ENCODE measurements at regions of chr18 and their contacts with region 1.

Region 1: DNA sequence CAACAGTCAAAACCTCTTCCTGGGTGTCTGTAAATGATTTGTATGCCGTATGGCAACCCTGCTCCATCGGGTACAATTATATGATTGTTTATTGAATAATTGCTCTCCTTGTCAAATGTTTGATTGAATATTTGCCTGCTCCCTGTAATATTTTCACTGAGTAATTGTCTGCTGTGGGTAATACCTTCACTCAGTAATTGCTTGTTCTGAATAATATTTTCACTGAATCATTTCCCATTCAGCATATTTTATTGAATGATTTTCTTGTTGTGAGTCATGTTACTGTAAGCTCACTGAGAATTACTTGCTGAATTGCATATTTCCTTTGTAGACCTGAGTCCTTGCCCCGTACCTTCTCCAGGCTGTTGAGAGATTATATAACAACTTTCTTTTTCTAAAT is 535.2 kb downstream of the METTL4 start:
- DNase-seq: no peak
- H3K4me3 Mint-ChIP-seq: peak overlapping the region; percentile 16
- H3K27ac Mint-ChIP-seq: peak overlapping the region; percentile 34
- H3K4me1 Mint-ChIP-seq: peaks cover 14% of the 10 kb centered on the region
- H3K27me3 Mint-ChIP-seq: no peaks in the 10 kb centered on the region
- CTCF ChIP-seq: no peak

Region 2: GRCh38 chr18:2096554-2096953 is 60.5 kb after region 1 on chr18:
- CTCF ChIA-PET with region 1: no interaction called
- intact Hi-C with region 1: loop called (anchors 10 kb)
- DNase-seq: no peak
- H3K4me3 Mint-ChIP-seq: no peak overlapping the region
- H3K27ac Mint-ChIP-seq: no peak overlapping the region
- H3K4me1 Mint-ChIP-seq: no peaks in the 10 kb centered on the region
- H3K27me3 Mint-ChIP-seq: no peaks in the 10 kb centered on the region
- CTCF ChIP-seq: no peak

Measured in Calu3 (cell line).